ENCODE measurements at regions of chr15 and their contacts with region 1.

Region 1: GRCh38 chr15:76177491-76178040 is 117.8 kb downstream of the TMEM266 start:
- DNase-seq: peak; percentile 76 to 91
- H3K4me3 ChIP-seq: peak overlapping the region in 1 of 2 donors; percentile 38
- H3K27ac ChIP-seq: peak overlapping the region; percentile 38 to 45
- H3K4me1 ChIP-seq: peaks cover 7 to 17% of the 10 kb centered on the region in 2 donors
- H3K27me3 ChIP-seq: no peaks in the 10 kb centered on the region
- CTCF ChIP-seq: no peak

Region 2: GRCh38 chr15:76150971-76151598 is 26.5 kb before region 1 on chr15:
- intact Hi-C with region 1: loop called (anchors 2 kb)
- DNase-seq: peak; percentile 29 to 86
- H3K4me3 ChIP-seq: peak overlapping the region in 1 of 2 donors; percentile 46
- H3K27ac ChIP-seq: peak overlapping the region; percentile 73 to 77
- H3K4me1 ChIP-seq: peaks cover 7 to 20% of the 10 kb centered on the region in 2 donors
- H3K27me3 ChIP-seq: no peaks in the 10 kb centered on the region
- CTCF ChIP-seq: peak; percentile 58 to 91 (median 85)